ENCODE measurements at regions of chr1 and their contacts with region 1.

Region 1: GRCh38 chr1:220294846-220295301 is 22.6 kb upstream of the RAB3GAP2 start:
- DNase-seq: no peak
- H3K4me3 ChIP-seq: no peak overlapping the region
- H3K27ac ChIP-seq: no peak overlapping the region
- H3K4me1 ChIP-seq: no peaks in the 10 kb centered on the region
- H3K27me3 ChIP-seq: no peaks in the 10 kb centered on the region
- CTCF ChIP-seq: no peak

Region 2: GRCh38 chr1:220533504-220534109 is 238.7 kb after region 1 on chr1:
- intact Hi-C with region 1: no loop called
- DNase-seq: no peak
- H3K4me3 ChIP-seq: no peak overlapping the region
- H3K27ac ChIP-seq: no peak overlapping the region
- H3K4me1 ChIP-seq: no peaks in the 10 kb centered on the region
- H3K27me3 ChIP-seq: peaks cover 8% of the 10 kb centered on the region
- CTCF ChIP-seq: no peak

Region 3: GRCh38 chr1:220786337-220787068 is 491.6 kb after region 1 on chr1 and contains the start of gene MTARC1:
- intact Hi-C with region 1: loop called (anchors 10 kb)
- DNase-seq: peak; percentile 91
- H3K4me3 ChIP-seq: peak within 1 kb of the TSS; percentile 56
- H3K27ac ChIP-seq: peak within 1 kb of the TSS; percentile 82
- H3K4me1 ChIP-seq: no peaks in the 10 kb centered on the region
- H3K27me3 ChIP-seq: no peaks in the 10 kb centered on the region
- CTCF ChIP-seq: no peak
- total RNA-seq, gene MTARC1: 33.6 to 37.0 TPM